A549 (cell line): ENCODE measurements at regions of chr2 and their contacts with region 1.

Region 1: DNA sequence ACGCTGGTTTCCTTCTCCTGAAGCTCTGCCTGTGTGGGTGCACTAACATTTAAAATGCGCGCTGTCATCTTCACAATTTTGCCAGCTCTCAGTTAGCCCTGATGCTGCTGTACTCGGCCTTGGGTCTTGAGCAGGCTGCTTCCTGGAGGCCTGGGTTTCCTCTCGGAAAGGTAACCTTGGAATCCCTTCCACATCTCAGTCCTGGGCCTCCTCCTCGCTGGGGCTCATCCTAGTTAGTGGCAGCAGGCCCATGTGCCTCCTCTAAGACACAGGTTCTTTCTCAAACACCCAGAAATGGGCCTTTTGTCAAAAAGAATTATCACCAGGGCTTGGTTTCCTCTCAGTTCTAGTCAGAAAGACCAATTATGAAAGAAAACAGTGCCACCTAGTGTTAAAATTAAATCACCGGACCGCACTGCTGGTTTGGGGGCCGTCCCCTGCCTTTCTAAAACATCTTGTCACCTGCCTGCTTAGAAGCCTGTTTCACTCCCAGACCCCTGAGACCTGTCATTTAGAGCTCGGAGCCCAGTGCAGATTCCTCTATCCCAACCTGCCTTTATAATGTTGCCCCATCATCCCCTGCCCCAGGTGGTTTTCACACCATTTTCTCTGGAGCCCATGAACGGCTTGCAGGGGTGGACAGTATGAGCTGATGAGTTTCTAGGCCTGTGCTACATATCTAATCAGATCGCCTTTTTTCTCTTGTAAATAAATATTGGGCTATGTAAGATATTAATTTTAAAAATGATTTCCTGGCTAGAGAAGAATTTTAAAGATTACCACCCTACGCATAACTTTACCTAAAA is 42.4 kb downstream of the HK2 start:
- DNase-seq: peak; percentile 57 to 65
- ATAC-seq: peak; percentile 82 to 94
- H3K4me3 ChIP-seq: no peak overlapping the region
- H3K27ac ChIP-seq: 0 out of 6 replicates have a peak overlapping the region, but pooled peaks of 1 of the 2 experiments have one; percentile 21
- H3K4me1 ChIP-seq: no peaks in the 10 kb centered on the region
- CTCF ChIP-seq: peak; percentile 89
- EP300 ChIP-seq: no peak
- POLR2A ChIP-seq: no peak
- RAD21 ChIP-seq: peak; percentile 89 to 94

Region 2: DNA sequence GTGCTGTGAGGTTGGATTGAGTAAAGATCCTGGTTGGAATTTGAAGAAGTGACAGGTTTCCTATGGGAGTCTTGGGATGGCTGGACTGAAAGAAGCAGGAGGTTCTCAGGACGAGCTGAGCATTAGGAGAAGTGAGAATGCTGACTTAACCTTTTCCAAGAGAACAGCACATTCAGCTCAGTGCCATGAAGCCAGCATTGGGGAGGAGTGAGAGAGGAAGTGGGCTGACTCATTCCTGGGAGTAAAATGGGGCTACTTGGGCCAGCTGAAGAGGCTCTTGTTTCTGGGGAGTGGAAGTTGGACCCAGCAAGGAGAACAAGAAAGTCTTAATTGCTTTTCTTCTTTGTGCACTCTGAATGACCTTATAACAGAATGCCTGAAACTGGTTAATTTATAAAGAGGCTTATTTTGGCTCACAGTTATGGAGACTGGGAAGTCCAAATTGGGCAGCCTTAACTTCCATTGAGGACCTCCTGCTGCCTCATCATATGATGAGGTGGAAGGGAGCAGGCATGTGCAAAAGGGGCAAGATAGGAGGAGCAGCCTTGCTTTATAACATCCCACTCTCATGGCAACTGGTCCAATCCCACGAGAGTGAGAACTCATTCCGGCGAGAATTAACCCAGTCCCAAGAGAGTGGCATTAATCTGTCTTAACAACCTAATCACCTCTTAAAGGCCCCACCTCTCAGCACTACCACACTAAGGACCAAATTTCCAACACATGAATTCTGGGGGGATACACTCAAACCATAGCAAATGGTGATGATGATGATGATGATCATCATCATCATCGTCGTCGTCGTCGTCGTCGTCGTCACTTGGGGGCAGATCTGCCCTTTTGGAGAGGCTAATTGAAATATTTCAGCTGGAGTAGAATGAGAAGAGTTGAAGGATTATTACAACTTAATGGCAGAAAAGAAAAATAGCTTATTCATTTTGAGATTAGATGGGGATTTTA is 923.5 kb before region 1 on chr2:
- CTCF ChIA-PET with region 1: no interaction called
- POLR2A ChIA-PET with region 1: no interaction called
- DNase-seq: no peak
- ATAC-seq: no peak
- H3K4me3 ChIP-seq: no peak overlapping the region
- H3K27ac ChIP-seq: no peak overlapping the region
- H3K4me1 ChIP-seq: no peaks in the 10 kb centered on the region
- CTCF ChIP-seq: no peak
- EP300 ChIP-seq: no peak
- POLR2A ChIP-seq: no peak
- RAD21 ChIP-seq: no peak

Region 3: GRCh38 chr2:74682501-74682900 is 193.8 kb before region 1 on chr2:
- CTCF ChIA-PET with region 1: interaction called, 74 read pairs
- POLR2A ChIA-PET with region 1: no interaction called
- DNase-seq: no peak
- ATAC-seq: no peak
- H3K4me3 ChIP-seq: no peak overlapping the region
- H3K27ac ChIP-seq: no peak overlapping the region
- H3K4me1 ChIP-seq: no peaks in the 10 kb centered on the region
- CTCF ChIP-seq: no peak
- EP300 ChIP-seq: no peak
- POLR2A ChIP-seq: no peak
- RAD21 ChIP-seq: no peak

Region 4: DNA sequence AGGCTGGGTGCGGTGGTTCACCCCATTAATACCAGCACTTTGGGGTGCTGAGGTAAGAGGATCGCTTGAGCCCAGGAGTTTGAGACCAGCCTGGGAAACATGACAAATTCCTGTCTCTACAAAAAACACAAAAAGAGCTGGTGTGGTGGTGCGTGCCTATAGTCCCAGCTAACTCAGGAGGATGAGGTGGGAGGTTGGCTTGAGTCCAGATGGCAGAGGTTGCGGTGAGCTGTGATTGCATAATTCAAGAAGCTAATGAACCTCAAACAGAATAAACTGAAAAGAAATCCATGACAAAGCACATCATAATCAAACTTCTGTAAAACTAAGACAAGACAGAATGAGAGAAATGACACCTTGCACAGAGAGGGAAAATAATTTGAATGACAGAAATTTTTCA is 167.4 kb before region 1 on chr2:
- CTCF ChIA-PET with region 1: interaction called, 238 read pairs
- POLR2A ChIA-PET with region 1: no interaction called
- DNase-seq: no peak
- ATAC-seq: no peak
- H3K4me3 ChIP-seq: no peak overlapping the region
- H3K27ac ChIP-seq: no peak overlapping the region
- H3K4me1 ChIP-seq: no peaks in the 10 kb centered on the region
- CTCF ChIP-seq: no peak
- EP300 ChIP-seq: no peak
- POLR2A ChIP-seq: no peak
- RAD21 ChIP-seq: no peak

Region 5: GRCh38 chr2:74812787-74813600 is 63.3 kb before region 1 on chr2:
- CTCF ChIA-PET with region 1: interaction called, 13 read pairs
- POLR2A ChIA-PET with region 1: no interaction called
- DNase-seq: no peak
- ATAC-seq: no peak
- H3K4me3 ChIP-seq: no peak overlapping the region
- H3K27ac ChIP-seq: no peak overlapping the region
- H3K4me1 ChIP-seq: no peaks in the 10 kb centered on the region
- CTCF ChIP-seq: no peak
- EP300 ChIP-seq: no peak
- POLR2A ChIP-seq: no peak
- RAD21 ChIP-seq: no peak

Region 6: GRCh38 chr2:74845217-74846011 is 30.9 kb before region 1 on chr2:
- CTCF ChIA-PET with region 1: interaction called, 28 read pairs
- POLR2A ChIA-PET with region 1: no interaction called
- DNase-seq: peak; percentile 55 to 76
- ATAC-seq: peak; percentile 96 to 97
- H3K4me3 ChIP-seq: no peak overlapping the region
- H3K27ac ChIP-seq: peak overlapping the region; percentile 5 to 70; a peak in 5 of 6 replicates
- H3K4me1 ChIP-seq: peaks cover 25% of the 10 kb centered on the region
- CTCF ChIP-seq: no peak
- EP300 ChIP-seq: no peak
- POLR2A ChIP-seq: no peak
- RAD21 ChIP-seq: no peak

Region 7: GRCh38 chr2:74887445-74887951 is 11.2 kb after region 1 on chr2:
- CTCF ChIA-PET with region 1: interaction called, 70 read pairs
- POLR2A ChIA-PET with region 1: no interaction called
- DNase-seq: no peak
- ATAC-seq: peak in 1 of 2 experiments; percentile 22; a peak in 2 of 6 replicates
- H3K4me3 ChIP-seq: no peak overlapping the region
- H3K27ac ChIP-seq: no peak overlapping the region
- H3K4me1 ChIP-seq: peaks cover 11% of the 10 kb centered on the region; the same call in 2 of the 3 replicates
- CTCF ChIP-seq: no peak
- EP300 ChIP-seq: no peak
- POLR2A ChIP-seq: no peak
- RAD21 ChIP-seq: no peak

Region 8: GRCh38 chr2:74906395-74906794 is 30.1 kb after region 1 on chr2:
- CTCF ChIA-PET with region 1: no interaction called
- POLR2A ChIA-PET with region 1: no interaction called
- DNase-seq: no peak
- ATAC-seq: no peak
- H3K4me3 ChIP-seq: no peak overlapping the region
- H3K27ac ChIP-seq: no peak overlapping the region
- H3K4me1 ChIP-seq: no peaks in the 10 kb centered on the region
- CTCF ChIP-seq: no peak
- EP300 ChIP-seq: no peak
- POLR2A ChIP-seq: no peak
- RAD21 ChIP-seq: no peak